ENCODE measurements at regions of chr2 and their contacts with region 1.

Region 1: GRCh38 chr2:11477994-11478393 is 12.0 kb upstream of the E2F6 start:
- DNase-seq: peak; percentile 93
- H3K4me3 Mint-ChIP-seq: no peak overlapping the region
- H3K27ac Mint-ChIP-seq: no peak overlapping the region
- H3K4me1 Mint-ChIP-seq: peaks cover under 1% of the 10 kb centered on the region
- H3K27me3 Mint-ChIP-seq: peaks cover 38% of the 10 kb centered on the region

Region 2: GRCh38 chr2:11056614-11057013 is 421.4 kb before region 1 on chr2:
- intact Hi-C with region 1: no loop called
- DNase-seq: no peak
- H3K4me3 Mint-ChIP-seq: no peak overlapping the region
- H3K27ac Mint-ChIP-seq: no peak overlapping the region
- H3K4me1 Mint-ChIP-seq: no peaks in the 10 kb centered on the region
- H3K27me3 Mint-ChIP-seq: peaks cover 12% of the 10 kb centered on the region

Region 3: GRCh38 chr2:11681722-11682589 is 204.0 kb after region 1 on chr2:
- intact Hi-C with region 1: loop called (anchors 1 kb)
- DNase-seq: peak; percentile 88
- H3K4me3 Mint-ChIP-seq: no peak overlapping the region
- H3K27ac Mint-ChIP-seq: no peak overlapping the region
- H3K4me1 Mint-ChIP-seq: peaks cover 5% of the 10 kb centered on the region
- H3K27me3 Mint-ChIP-seq: peaks cover 32% of the 10 kb centered on the region

Region 4: GRCh38 chr2:13308989-13309388 is 1831.0 kb after region 1 on chr2:
- intact Hi-C with region 1: no loop called
- DNase-seq: no peak
- H3K4me3 Mint-ChIP-seq: no peak overlapping the region
- H3K27ac Mint-ChIP-seq: no peak overlapping the region
- H3K4me1 Mint-ChIP-seq: no peaks in the 10 kb centered on the region
- H3K27me3 Mint-ChIP-seq: no peaks in the 10 kb centered on the region

Measured in activated CD4-positive, alpha-beta T cell treated with anti-CD3 and anti-CD28 coated beads, Interleukin-2, amount 10 ng/mL, durations not matched to agents 24 days and 14 days (primary cell).